ENCODE measurements at regions of chr7 and their contacts with region 1.

Region 1: GRCh38 chr7:30062591-30062990 is 34.4 kb downstream of the PLEKHA8 start:
- DNase-seq: peak in 2 of 5 donors; percentile 5 to 13
- H3K4me3 ChIP-seq: no peak overlapping the region
- H3K4me3 Mint-ChIP-seq: no peak overlapping the region
- H3K27ac ChIP-seq: no peak overlapping the region
- H3K27ac Mint-ChIP-seq: no peak overlapping the region
- H3K4me1 ChIP-seq: no peaks in the 10 kb centered on the region
- H3K4me1 Mint-ChIP-seq: peaks cover 5 to 9% (median 7%) of the 10 kb centered on the region in 3 donors
- H3K27me3 ChIP-seq: no peaks in the 10 kb centered on the region
- H3K27me3 Mint-ChIP-seq: no peaks in the 10 kb centered on the region

Region 2: GRCh38 chr7:29878081-29878688 is 184.4 kb before region 1 on chr7:
- CTCF ChIA-PET with region 1: interaction called, 12 read pairs
- POLR2A ChIA-PET with region 1: no interaction called
- DNase-seq: peak in 2 of 5 donors; percentile 6 to 9
- H3K4me3 ChIP-seq: no peak overlapping the region
- H3K4me3 Mint-ChIP-seq: peak overlapping the region in 1 of 7 donors; percentile 10
- H3K27ac ChIP-seq: no peak overlapping the region
- H3K27ac Mint-ChIP-seq: no peak overlapping the region
- H3K4me1 ChIP-seq: no peaks in the 10 kb centered on the region
- H3K4me1 Mint-ChIP-seq: peaks cover 2 to 6% (median 3%) of the 10 kb centered on the region in 3 donors
- H3K27me3 ChIP-seq: no peaks in the 10 kb centered on the region
- H3K27me3 Mint-ChIP-seq: peaks cover 9 to 12% of the 10 kb centered on the region in 2 donors

Region 3: DNA sequence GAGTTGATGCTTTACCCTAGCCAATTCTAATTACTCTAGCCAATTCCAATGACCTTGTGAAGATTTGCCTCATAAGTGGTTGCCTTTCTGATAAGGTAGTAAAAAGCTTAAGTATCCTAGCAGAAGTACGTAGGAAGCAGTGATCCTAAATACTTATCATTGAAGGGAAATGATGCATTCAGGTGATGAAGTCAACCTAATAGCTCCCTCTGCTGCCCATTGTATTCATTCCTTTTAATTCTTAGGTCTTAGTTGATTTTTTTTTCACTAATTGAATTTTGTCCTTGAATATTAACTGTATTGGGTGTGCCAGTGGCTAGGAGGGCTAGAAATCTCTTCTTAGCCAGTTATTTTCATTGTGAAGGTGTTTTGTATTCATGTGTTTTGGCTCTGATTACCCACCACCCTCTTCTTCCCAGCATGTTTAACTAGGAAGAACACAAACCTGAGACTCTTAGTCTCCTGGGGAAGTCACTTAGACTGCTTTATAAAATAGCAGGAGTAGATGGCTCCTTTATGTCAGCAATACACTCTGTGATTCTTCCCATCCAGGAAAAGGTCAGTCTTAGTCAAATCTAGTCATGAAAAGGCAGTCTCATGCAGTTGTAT is 11.9 kb after region 1 on chr7:
- CTCF ChIA-PET with region 1: interaction called, 20 read pairs
- POLR2A ChIA-PET with region 1: no interaction called
- DNase-seq: no peak
- H3K4me3 ChIP-seq: no peak overlapping the region
- H3K4me3 Mint-ChIP-seq: no peak overlapping the region
- H3K27ac ChIP-seq: no peak overlapping the region
- H3K27ac Mint-ChIP-seq: no peak overlapping the region
- H3K4me1 ChIP-seq: no peaks in the 10 kb centered on the region
- H3K4me1 Mint-ChIP-seq: peaks cover 0 to 3% (median 0%) of the 10 kb centered on the region in 3 donors
- H3K27me3 ChIP-seq: no peaks in the 10 kb centered on the region
- H3K27me3 Mint-ChIP-seq: no peaks in the 10 kb centered on the region